ENCODE measurements at regions of chr18 and their contacts with region 1.

Region 1: GRCh38 chr18:74495581-74496507 is at the start of gene CNDP2:
- DNase-seq: peak; percentile 90 to 99 (median 95)
- ATAC-seq: peak; percentile 74 to 77 (median 76)
- H3K4me3 ChIP-seq: peak within 1 kb of the TSS; percentile 76 to 78
- H3K4me3 Mint-ChIP-seq: peak within 1 kb of the TSS; percentile 95 to 98 (median 96)
- H3K27ac ChIP-seq: peak within 1 kb of the TSS; percentile 92
- H3K27ac Mint-ChIP-seq: peak within 1 kb of the TSS; percentile 90 to 99
- H3K4me1 ChIP-seq: peaks cover 29 to 45% of the 10 kb centered on the region in 2 experiments
- H3K4me1 Mint-ChIP-seq: peaks cover 43 to 47% (median 46%) of the 10 kb centered on the region in 3 donors
- H3K27me3 ChIP-seq: no peaks in the 10 kb centered on the region
- H3K27me3 Mint-ChIP-seq: no peaks in the 10 kb centered on the region
- total RNA-seq, gene CNDP2: 113 to 150 (median 137) TPM

Region 2: GRCh38 chr18:74225193-74225840 is 270.5 kb before region 1 on chr18:
- CTCF ChIA-PET with region 1: no interaction called
- POLR2A ChIA-PET with region 1: no interaction called
- DNase-seq: no peak
- ATAC-seq: no peak
- H3K4me3 ChIP-seq: no peak overlapping the region
- H3K4me3 Mint-ChIP-seq: no peak overlapping the region
- H3K27ac ChIP-seq: no peak overlapping the region
- H3K27ac Mint-ChIP-seq: no peak overlapping the region
- H3K4me1 ChIP-seq: no peaks in the 10 kb centered on the region
- H3K4me1 Mint-ChIP-seq: no peaks in the 10 kb centered on the region
- H3K27me3 ChIP-seq: no peaks in the 10 kb centered on the region
- H3K27me3 Mint-ChIP-seq: peaks cover 6 to 9% of the 10 kb centered on the region in 2 donors

Region 3: DNA sequence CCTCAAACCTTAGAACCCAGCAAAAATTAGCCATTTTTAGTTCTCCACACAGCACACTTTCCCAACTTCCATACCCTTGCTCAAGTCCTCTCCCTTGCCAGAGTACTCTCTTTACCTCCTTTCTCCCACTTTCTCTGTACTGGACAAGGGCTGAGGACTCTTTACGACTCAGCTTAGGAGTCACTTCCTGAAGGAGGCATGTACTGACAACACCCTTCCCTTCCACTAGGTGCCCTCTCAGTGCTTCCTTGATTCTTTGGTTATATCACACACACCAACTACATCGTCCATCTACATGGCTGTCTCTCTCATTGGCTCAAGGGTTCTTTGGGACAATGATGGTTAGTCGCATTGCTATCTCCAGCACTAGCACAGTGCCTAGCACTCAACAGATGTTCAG is 185.4 kb before region 1 on chr18:
- CTCF ChIA-PET with region 1: interaction called, 5 to 13 read pairs
- POLR2A ChIA-PET with region 1: no interaction called
- DNase-seq: peak in 1 of 35 experiments; percentile 53
- ATAC-seq: peak in 3 of 4 experiments; percentile 26 to 89 (median 54)
- H3K4me3 ChIP-seq: no peak overlapping the region
- H3K4me3 Mint-ChIP-seq: no peak overlapping the region
- H3K27ac ChIP-seq: no peak overlapping the region
- H3K27ac Mint-ChIP-seq: no peak overlapping the region
- H3K4me1 ChIP-seq: no peaks in the 10 kb centered on the region
- H3K4me1 Mint-ChIP-seq: peaks cover 0 to 9% (median 0%) of the 10 kb centered on the region in 3 donors
- H3K27me3 ChIP-seq: peaks cover 0 to 7% of the 10 kb centered on the region in 2 experiments
- H3K27me3 Mint-ChIP-seq: peaks cover 28 to 36% of the 10 kb centered on the region in 2 donors

Region 4: GRCh38 chr18:74353169-74353775 is 142.6 kb before region 1 on chr18:
- CTCF ChIA-PET with region 1: interaction called, 95 to 202 read pairs
- POLR2A ChIA-PET with region 1: interaction called, 3 to 6 read pairs
- DNase-seq: peak in 34 of 35 experiments; percentile 30 to 84 (median 56)
- ATAC-seq: peak; percentile 79 to 89 (median 82)
- H3K4me3 ChIP-seq: no peak overlapping the region
- H3K4me3 Mint-ChIP-seq: no peak overlapping the region
- H3K27ac ChIP-seq: no peak overlapping the region
- H3K27ac Mint-ChIP-seq: no peak overlapping the region
- H3K4me1 ChIP-seq: peaks cover 0 to 3% of the 10 kb centered on the region in 2 experiments
- H3K4me1 Mint-ChIP-seq: peaks cover 13 to 14% (median 14%) of the 10 kb centered on the region in 3 donors
- H3K27me3 ChIP-seq: no peaks in the 10 kb centered on the region
- H3K27me3 Mint-ChIP-seq: no peaks in the 10 kb centered on the region

Region 5: DNA sequence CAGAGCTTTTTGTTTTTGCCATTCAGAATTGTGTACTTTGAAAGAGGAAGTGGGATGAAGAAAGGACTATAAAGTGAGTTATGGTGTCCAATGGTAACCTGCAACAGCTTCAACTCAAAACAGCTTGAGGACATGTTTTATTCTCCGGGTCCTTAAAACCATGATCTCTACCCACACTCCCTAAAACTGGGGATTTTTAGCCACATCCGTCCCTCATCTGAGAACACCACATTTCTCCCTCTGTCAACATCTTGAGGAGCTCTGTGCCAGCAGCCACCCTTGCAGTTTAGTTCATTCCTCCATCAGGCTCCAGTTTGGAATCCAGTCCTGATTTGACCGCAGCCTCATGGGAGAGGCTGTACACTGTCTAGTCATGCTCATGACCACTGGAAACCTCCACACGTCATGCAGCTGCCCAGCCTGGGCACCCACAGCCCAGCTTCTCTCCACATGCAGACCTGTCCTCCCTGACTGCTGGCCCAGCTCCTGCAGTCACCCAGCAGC is 117.6 kb before region 1 on chr18:
- CTCF ChIA-PET with region 1: interaction called, 15 to 46 read pairs
- POLR2A ChIA-PET with region 1: interaction called, 4 to 5 read pairs
- DNase-seq: peak in 29 of 35 experiments; percentile 8 to 74 (median 32)
- ATAC-seq: peak; percentile 38 to 71 (median 50)
- H3K4me3 ChIP-seq: peak overlapping the region in 1 of 2 donors; percentile 25
- H3K4me3 Mint-ChIP-seq: peak overlapping the region; percentile 21 to 71 (median 58)
- H3K27ac ChIP-seq: peak overlapping the region; percentile 43
- H3K27ac Mint-ChIP-seq: peak overlapping the region; percentile 92
- H3K4me1 ChIP-seq: peaks cover 41 to 44% of the 10 kb centered on the region in 2 experiments
- H3K4me1 Mint-ChIP-seq: peaks cover 56 to 63% (median 61%) of the 10 kb centered on the region in 3 donors
- H3K27me3 ChIP-seq: peaks cover 0 to 7% of the 10 kb centered on the region in 2 experiments
- H3K27me3 Mint-ChIP-seq: no peaks in the 10 kb centered on the region

Region 6: DNA sequence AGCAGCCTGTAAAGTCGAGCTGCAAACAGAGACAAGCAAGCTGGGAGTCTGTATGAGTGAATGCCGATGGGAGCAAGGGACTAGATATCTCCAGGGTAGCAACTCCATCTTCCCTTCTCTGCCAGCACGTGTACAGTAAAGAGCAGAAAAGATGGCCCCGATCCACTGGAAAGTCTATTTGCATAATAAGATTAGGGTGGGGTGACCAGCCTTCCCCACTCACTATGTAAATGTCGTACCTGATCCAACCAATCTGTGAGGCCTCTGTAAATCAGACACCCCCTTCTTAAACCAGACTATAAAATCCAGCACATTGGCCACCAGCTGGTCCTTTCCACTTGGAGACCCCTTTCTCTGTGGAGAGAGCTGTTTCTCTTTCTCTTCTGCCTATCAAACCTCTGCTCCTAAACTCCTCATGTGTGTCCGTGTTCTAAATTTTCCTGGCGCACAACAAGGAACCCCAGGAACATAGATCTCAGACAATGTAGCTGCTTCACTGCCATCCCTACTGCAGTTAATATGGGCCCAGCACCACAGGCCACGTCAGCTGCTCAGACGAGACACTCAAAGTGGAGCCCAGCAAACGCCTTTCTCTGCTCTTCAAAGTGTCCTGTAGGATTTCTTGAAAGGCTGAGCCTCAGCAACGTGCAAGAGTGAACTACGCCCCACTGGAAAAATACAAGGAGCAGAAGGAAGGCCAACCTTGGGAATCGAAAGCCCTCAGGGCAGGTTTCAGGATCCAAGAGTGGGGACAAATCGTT is 64.9 kb before region 1 on chr18:
- CTCF ChIA-PET with region 1: no interaction called
- POLR2A ChIA-PET with region 1: no interaction called
- DNase-seq: no peak
- ATAC-seq: no peak
- H3K4me3 ChIP-seq: no peak overlapping the region
- H3K4me3 Mint-ChIP-seq: no peak overlapping the region
- H3K27ac ChIP-seq: no peak overlapping the region
- H3K27ac Mint-ChIP-seq: no peak overlapping the region
- H3K4me1 ChIP-seq: no peaks in the 10 kb centered on the region
- H3K4me1 Mint-ChIP-seq: peaks cover 0 to 18% (median 2%) of the 10 kb centered on the region in 3 donors
- H3K27me3 ChIP-seq: peaks cover 0 to 2% of the 10 kb centered on the region in 2 experiments
- H3K27me3 Mint-ChIP-seq: peaks cover 0 to 2% of the 10 kb centered on the region in 2 donors